Activated B cell treated with CpG ODN at 0.5 μM for 24 hours (primary cell): ENCODE measurements at regions of chrX and their contacts with region 1.

Region 1: DNA sequence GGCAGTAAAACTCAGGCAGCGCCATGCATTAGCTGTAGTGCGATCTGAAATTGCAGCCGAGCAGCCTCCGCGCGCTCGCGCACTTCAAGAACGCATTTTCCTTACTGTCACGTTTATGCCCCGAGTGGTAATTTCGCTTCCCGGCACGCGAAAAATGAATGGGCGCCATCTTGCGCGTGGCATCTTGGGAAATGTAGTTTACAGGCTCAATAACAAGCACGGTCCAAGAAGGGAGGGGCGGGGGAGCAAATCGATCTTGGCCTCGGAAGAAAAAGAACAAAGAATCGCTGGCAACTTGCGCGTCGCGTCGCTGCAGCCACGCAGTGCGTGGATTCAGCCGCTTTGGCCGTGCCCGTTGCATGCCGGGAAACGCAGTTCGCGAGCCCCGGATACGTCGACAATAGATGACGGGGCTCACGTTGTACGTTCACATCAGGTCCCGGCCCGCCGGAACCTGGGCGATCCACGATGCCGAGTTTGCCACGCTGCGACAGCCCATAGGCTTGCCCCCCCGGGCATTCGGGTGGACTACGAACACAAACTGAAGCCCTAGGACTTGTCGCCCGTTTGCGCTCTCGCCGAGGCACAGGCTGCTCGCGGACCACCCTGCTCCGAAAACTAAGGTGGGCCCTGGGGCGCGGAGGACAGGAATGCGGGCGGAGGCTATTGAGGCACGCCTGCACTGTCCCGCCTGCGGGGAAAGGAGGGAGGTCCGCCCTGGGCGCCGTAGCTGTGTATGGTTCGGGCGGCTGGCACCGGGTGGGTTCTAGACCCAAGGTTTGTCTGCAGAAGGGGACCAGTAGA is at the start of gene FTSJ1:
- DNase-seq: peak; percentile 70
- ATAC-seq: peak; percentile 87
- H3K4me3 Mint-ChIP-seq: peak within 1 kb of the TSS; percentile 89
- H3K27ac Mint-ChIP-seq: peak within 1 kb of the TSS; percentile 93
- H3K4me1 Mint-ChIP-seq: peaks cover 23% of the 10 kb centered on the region
- H3K27me3 Mint-ChIP-seq: no peaks in the 10 kb centered on the region
- CTCF ChIP-seq: no peak
- total RNA-seq, gene FTSJ1: 39.9 and 44.5 TPM in 2 replicates

Region 2: DNA sequence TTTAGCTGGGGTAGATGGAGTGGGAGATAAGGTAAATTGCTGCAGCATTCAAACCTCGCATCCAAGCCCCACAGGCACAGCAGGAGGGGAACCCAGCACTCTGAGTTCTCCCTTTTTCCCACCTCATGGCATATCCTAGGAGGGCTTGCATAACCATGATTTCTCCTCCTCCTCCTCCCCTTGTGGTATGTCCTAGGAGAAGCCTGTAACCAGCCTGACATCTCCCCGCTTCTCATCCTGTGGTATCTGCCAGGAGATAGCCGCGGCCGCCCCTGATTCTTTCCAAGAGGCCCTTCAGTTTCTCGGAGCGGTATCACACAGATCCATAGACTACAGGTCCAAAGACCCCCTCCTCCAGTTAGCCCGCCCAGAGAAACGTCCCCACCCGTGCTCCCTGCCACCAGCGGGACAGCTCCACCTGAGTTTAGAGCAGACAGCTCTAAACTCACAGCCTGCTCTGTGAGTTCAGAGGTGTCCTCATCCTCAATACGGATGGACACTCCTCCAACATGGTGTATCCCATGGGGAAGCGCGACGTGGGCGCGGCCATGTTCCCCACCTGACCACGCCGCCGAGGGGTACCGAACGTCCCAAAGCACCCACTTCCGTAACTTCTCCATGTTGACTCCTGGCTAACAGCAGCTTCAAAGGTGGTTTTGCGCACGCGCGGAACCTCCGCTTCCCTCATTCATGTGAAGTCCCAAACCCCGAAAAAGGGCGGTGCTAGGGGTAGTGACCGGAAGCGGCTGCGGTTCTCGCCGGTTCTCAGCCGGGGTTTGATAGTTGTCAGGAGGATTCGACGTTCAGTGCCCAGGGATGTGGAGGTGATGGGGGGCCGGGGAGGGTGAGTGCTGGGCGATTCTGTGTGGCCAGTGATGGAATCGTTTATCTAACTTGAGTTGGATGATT is 639.6 kb before region 1 on chrX and contains the start of gene ZNF81:
- CTCF ChIA-PET with region 1: no interaction called
- POLR2A ChIA-PET with region 1: no interaction called
- intact Hi-C with region 1: loop called (anchors 2 kb)
- DNase-seq: peak; percentile 76
- ATAC-seq: peak; percentile 95
- H3K4me3 Mint-ChIP-seq: peak within 1 kb of the TSS; percentile 93
- H3K27ac Mint-ChIP-seq: peak within 1 kb of the TSS; percentile 93
- H3K4me1 Mint-ChIP-seq: peaks cover 21% of the 10 kb centered on the region
- H3K27me3 Mint-ChIP-seq: no peaks in the 10 kb centered on the region
- CTCF ChIP-seq: no peak
- total RNA-seq, gene ZNF81: 11.0 and 15.3 TPM in 2 replicates

Region 3: GRCh38 chrX:48508400-48509244 is 32.6 kb after region 1 on chrX and contains the start of gene PORCN:
- CTCF ChIA-PET with region 1: interaction called, 4 read pairs
- POLR2A ChIA-PET with region 1: interaction called, 6 read pairs
- intact Hi-C with region 1: loop called (anchors 1 kb)
- DNase-seq: peak; percentile 65
- ATAC-seq: peak; percentile 88
- H3K4me3 Mint-ChIP-seq: peak within 1 kb of the TSS; percentile 91
- H3K27ac Mint-ChIP-seq: peak within 1 kb of the TSS; percentile 91
- H3K4me1 Mint-ChIP-seq: peaks cover 11% of the 10 kb centered on the region
- H3K27me3 Mint-ChIP-seq: no peaks in the 10 kb centered on the region
- CTCF ChIP-seq: no peak
- total RNA-seq, gene PORCN: 7.8 and 9.8 TPM in 2 replicates

Region 4: DNA sequence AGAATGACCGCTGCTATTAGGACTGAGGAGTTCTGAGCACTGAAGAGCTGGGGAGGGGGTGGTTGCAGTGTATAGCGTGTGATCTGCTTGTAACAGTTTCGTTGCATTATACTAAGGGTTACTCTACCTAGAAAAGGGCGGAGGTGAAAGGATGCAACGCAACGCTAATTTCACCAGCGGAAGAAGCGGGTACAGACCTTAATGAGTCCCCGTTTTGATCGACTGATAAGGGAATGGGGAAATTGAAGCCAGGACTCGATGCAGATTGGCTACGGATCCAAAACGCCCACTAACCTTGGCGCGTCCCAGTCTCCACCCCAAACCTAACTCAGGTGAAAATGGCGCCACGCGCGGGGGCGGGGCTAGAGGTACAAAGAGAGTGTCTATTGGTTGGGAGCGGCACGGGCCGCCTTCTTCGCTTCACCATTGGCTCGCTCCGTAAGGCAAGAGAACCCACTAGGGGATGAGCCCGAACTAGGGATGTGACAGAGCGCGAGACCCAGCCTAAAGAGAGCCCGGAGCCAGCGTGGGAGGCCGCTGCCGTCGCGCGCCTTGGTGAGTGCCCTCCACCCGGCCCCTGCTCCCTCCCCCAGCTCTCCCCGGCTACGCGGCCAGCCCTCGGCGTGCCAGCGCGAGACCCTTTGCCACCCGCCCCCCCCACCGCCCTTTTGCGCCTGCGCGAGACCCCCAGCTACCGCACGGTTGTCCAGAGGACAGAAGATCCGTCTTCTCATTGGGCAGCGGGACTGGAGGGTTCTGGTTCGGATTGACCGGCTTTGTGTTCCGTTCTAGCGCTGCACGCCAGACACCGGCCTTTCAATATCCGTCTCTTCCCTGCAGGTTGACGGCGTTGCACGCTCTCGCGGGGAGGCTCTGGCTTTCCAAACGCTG is 45.6 kb after region 1 on chrX and contains the start of gene EBP:
- CTCF ChIA-PET with region 1: no interaction called
- POLR2A ChIA-PET with region 1: no interaction called
- intact Hi-C with region 1: loop called (anchors 1 kb)
- DNase-seq: peak; percentile 79
- ATAC-seq: peak; percentile 96
- H3K4me3 Mint-ChIP-seq: peak within 1 kb of the TSS; percentile 86
- H3K27ac Mint-ChIP-seq: peak within 1 kb of the TSS; percentile 88
- H3K4me1 Mint-ChIP-seq: peaks cover 24% of the 10 kb centered on the region
- H3K27me3 Mint-ChIP-seq: no peaks in the 10 kb centered on the region
- CTCF ChIP-seq: no peak
- total RNA-seq, gene EBP: 72.4 and 75.5 TPM in 2 replicates